MCF 10A (cell line): ENCODE measurements at regions of chr20 and their contacts with region 1.

Region 1: DNA sequence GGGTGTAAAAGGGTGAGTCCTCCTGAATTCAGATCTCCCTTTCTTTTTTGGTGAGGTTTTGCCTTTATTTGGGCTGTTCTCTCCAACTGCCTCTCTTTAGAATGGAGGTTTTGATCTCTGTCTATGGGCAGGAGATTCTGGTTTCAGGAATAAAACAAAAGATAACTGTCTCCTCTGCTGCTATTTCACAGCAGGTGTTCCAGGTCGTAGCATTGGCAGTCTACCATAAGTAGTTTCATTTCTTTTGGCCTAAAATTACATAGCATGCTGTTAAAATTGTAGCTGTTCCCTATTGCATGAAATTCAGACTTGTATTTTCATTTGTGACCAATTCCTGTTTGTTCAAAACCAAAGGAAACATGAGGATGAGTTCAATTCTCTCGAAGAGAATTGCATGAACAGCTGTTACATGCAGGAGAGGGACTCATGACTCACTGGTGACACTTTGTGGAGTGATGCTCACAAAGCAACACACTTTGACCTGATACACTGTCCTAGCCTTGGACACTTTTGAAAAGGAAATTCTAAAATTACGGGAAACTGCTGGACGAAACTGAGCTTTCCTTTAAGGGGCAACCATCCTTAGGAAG is 76.8 kb upstream of the SIRPG start:
- DNase-seq: peak; percentile 52
- H3K4me3 Mint-ChIP-seq: no peak overlapping the region
- H3K27ac Mint-ChIP-seq: no peak overlapping the region
- H3K4me1 Mint-ChIP-seq: no peaks in the 10 kb centered on the region
- H3K27me3 Mint-ChIP-seq: no peaks in the 10 kb centered on the region
- CTCF ChIP-seq: peak; percentile 48

Region 2: DNA sequence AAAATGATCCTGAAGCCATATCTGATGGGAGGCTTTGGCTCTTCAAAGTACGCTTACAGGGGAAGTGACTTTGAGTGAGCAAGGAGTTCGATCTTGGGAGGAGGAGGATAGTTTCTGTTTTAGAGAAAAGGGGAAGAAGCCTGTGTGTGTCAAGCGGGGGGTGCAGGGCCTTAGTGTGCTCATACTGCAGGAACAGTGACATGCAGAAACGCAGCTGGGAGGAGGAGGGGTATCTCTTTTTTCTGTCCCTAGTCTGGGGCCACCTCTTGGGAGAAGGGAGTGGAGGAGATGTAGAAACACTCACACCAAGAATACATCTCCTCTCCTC is 196.7 kb before region 1 on chr20:
- CTCF ChIA-PET with region 1: interaction called, 10 read pairs
- POLR2A ChIA-PET with region 1: no interaction called
- intact Hi-C with region 1: loop called (anchors 1 kb)
- DNase-seq: no peak
- H3K4me3 Mint-ChIP-seq: no peak overlapping the region
- H3K27ac Mint-ChIP-seq: peak overlapping the region; percentile 44
- H3K4me1 Mint-ChIP-seq: no peaks in the 10 kb centered on the region
- H3K27me3 Mint-ChIP-seq: no peaks in the 10 kb centered on the region
- CTCF ChIP-seq: no peak

Region 3: GRCh38 chr20:1555952-1556351 is 178.4 kb before region 1 on chr20:
- CTCF ChIA-PET with region 1: interaction called, 4 read pairs
- POLR2A ChIA-PET with region 1: no interaction called
- intact Hi-C with region 1: loop called (anchors 1 kb)
- DNase-seq: no peak
- H3K4me3 Mint-ChIP-seq: no peak overlapping the region
- H3K27ac Mint-ChIP-seq: no peak overlapping the region
- H3K4me1 Mint-ChIP-seq: no peaks in the 10 kb centered on the region
- H3K27me3 Mint-ChIP-seq: no peaks in the 10 kb centered on the region
- CTCF ChIP-seq: no peak

Region 4: GRCh38 chr20:1718604-1719384 is 15.6 kb before region 1 on chr20:
- CTCF ChIA-PET with region 1: interaction called, 13 read pairs
- POLR2A ChIA-PET with region 1: interaction called, 9 read pairs
- intact Hi-C with region 1: no loop called
- DNase-seq: peak; percentile 98
- H3K4me3 Mint-ChIP-seq: peak overlapping the region; percentile 4
- H3K27ac Mint-ChIP-seq: peak overlapping the region; percentile 37
- H3K4me1 Mint-ChIP-seq: peaks cover 22% of the 10 kb centered on the region
- H3K27me3 Mint-ChIP-seq: no peaks in the 10 kb centered on the region
- CTCF ChIP-seq: no peak